Activated CD8-positive, alpha-beta T cell treated with anti-CD3 and anti-CD28 coated beads for 36 hours (primary cell): ENCODE measurements at regions of chr20 and their contacts with region 1.

Region 1: GRCh38 chr20:1952737-1953530 is 40.9 kb downstream of the PDYN start:
- DNase-seq: no peak
- ATAC-seq: no peak
- H3K4me3 Mint-ChIP-seq: no peak overlapping the region
- H3K27ac Mint-ChIP-seq: no peak overlapping the region
- H3K4me1 Mint-ChIP-seq: no peaks in the 10 kb centered on the region
- H3K27me3 Mint-ChIP-seq: peaks cover 11% of the 10 kb centered on the region
- CTCF ChIP-seq: no peak

Region 2: GRCh38 chr20:1938464-1939269 is 14.3 kb before region 1 on chr20:
- CTCF ChIA-PET with region 1: no interaction called
- POLR2A ChIA-PET with region 1: no interaction called
- intact Hi-C with region 1: loop called (anchors 1 kb)
- DNase-seq: no peak
- ATAC-seq: no peak
- H3K4me3 Mint-ChIP-seq: no peak overlapping the region
- H3K27ac Mint-ChIP-seq: no peak overlapping the region
- H3K4me1 Mint-ChIP-seq: no peaks in the 10 kb centered on the region
- H3K27me3 Mint-ChIP-seq: peaks cover 8% of the 10 kb centered on the region
- CTCF ChIP-seq: no peak